ENCODE measurements at regions of chr12 and their contacts with region 1.

Region 1: GRCh38 chr12:57213058-57213715 is 3.4 kb upstream of the NXPH4 start:
- DNase-seq: peak; percentile 79 to 83 (median 82)
- H3K4me3 ChIP-seq: no peak overlapping the region
- H3K4me3 Mint-ChIP-seq: peak overlapping the region in 5 of 8 donors; percentile 39 to 76 (median 49)
- H3K27ac ChIP-seq: no peak overlapping the region
- H3K27ac Mint-ChIP-seq: peak overlapping the region in 5 of 7 donors; percentile 14 to 88 (median 71)
- H3K4me1 ChIP-seq: peaks cover 40% of the 10 kb centered on the region
- H3K4me1 Mint-ChIP-seq: peaks cover 27 to 49% (median 30%) of the 10 kb centered on the region in 4 donors
- H3K27me3 ChIP-seq: peaks cover 38% of the 10 kb centered on the region
- H3K27me3 Mint-ChIP-seq: peaks cover 29 to 35% of the 10 kb centered on the region in 2 donors

Region 2: DNA sequence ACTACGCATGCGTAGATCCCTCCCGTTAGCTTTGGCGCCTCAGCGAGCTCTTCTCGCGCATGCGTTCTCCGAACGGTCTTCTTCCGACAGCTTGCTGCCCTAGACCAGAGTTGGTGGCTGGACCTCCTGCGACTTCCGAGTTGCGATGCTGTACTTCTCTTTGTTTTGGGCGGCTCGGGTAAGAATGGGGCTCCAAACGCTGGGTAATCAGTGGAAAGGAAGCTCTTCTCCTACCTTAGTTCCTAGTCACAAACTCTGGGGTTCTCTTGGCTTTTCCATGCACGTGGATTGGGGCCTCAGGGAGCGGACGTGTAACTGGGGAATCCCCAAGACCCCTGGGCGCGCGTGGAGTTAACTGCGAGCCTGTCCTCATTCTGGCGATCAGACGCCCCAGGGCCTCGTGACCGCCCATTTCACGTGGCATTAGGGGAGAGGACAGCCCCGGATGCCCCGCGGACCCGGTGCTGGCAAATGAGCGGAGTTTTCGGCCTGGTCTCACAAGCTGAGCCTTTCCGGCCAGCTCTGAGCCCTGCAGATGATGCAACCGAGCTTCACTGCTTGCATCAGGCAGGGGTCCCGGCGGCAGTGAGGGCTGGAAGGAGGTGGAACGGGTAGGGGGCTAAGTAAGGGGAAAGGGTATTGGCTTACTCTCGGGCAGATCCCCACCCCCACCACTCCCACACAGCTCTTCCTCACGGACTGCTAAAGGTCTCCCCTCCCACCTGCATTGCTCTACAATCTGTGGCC is 16.6 kb after region 1 on chr12 and contains the start of gene SHMT2:
- CTCF ChIA-PET with region 1: interaction called, 157 read pairs
- POLR2A ChIA-PET with region 1: interaction called, 8 read pairs
- intact Hi-C with region 1: loop called (anchors 1 kb)
- DNase-seq: peak; percentile 89 to 90 (median 90)
- H3K4me3 ChIP-seq: peak within 1 kb of the TSS; percentile 80 to 90
- H3K4me3 Mint-ChIP-seq: peak within 1 kb of the TSS; percentile 92 to 99 (median 94)
- H3K27ac ChIP-seq: peak within 1 kb of the TSS; percentile 57
- H3K27ac Mint-ChIP-seq: peak within 1 kb of the TSS; percentile 80 to 95 (median 89)
- H3K4me1 ChIP-seq: peaks cover 66% of the 10 kb centered on the region
- H3K4me1 Mint-ChIP-seq: peaks cover 27 to 67% (median 46%) of the 10 kb centered on the region in 4 donors
- H3K27me3 ChIP-seq: peaks cover 16% of the 10 kb centered on the region
- H3K27me3 Mint-ChIP-seq: peaks cover 14 to 17% of the 10 kb centered on the region in 2 donors
- total RNA-seq, gene SHMT2: 39.8 to 46.1 TPM

Region 3: DNA sequence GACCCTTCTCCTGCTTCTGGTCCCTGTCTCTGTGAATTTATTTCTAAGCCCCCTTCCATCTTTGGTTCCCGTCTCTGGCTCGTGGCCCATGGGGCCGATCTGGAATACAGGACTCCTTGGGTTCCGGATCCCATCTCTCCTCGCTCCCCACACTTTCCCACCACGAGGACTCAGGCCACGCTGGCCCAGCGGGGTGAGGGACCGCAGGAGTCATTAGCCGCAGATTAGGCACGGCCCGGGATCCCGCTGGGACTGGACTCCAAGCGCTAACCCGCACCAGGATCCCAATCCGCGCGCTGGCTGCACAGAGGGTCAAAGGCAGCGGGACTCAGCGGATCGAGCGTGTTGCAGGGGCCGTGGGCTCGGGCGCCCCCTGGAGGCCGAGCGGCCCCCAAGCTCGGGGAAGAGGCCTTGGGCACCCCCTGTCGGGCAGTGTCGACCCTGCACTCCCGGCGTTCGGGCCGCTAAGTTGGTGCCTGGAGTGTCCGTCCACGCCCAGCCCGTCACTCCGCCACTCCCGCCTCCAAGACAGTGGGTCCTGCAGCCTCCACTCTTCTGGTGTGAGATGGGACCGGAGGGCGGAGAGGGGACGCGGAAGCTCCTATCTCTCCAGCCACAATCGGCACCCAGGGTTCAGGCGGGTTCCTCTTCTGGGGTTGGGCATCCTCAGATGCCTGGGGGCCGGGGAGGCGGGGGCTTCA is 25.8 kb after region 1 on chr12:
- CTCF ChIA-PET with region 1: interaction called, 415 read pairs
- POLR2A ChIA-PET with region 1: interaction called, 86 read pairs
- intact Hi-C with region 1: loop called (anchors 1 kb)
- DNase-seq: peak; percentile 80 to 87 (median 82)
- H3K4me3 ChIP-seq: peak overlapping the region; percentile 42 to 79
- H3K4me3 Mint-ChIP-seq: peak overlapping the region; percentile 90 to 98 (median 94)
- H3K27ac ChIP-seq: no peak overlapping the region
- H3K27ac Mint-ChIP-seq: peak overlapping the region in 6 of 7 donors; percentile 7 to 85 (median 62)
- H3K4me1 ChIP-seq: peaks cover 87% of the 10 kb centered on the region
- H3K4me1 Mint-ChIP-seq: peaks cover 41 to 88% (median 60%) of the 10 kb centered on the region in 4 donors
- H3K27me3 ChIP-seq: peaks cover 43% of the 10 kb centered on the region
- H3K27me3 Mint-ChIP-seq: peaks cover 32 to 52% of the 10 kb centered on the region in 2 donors

Region 4: DNA sequence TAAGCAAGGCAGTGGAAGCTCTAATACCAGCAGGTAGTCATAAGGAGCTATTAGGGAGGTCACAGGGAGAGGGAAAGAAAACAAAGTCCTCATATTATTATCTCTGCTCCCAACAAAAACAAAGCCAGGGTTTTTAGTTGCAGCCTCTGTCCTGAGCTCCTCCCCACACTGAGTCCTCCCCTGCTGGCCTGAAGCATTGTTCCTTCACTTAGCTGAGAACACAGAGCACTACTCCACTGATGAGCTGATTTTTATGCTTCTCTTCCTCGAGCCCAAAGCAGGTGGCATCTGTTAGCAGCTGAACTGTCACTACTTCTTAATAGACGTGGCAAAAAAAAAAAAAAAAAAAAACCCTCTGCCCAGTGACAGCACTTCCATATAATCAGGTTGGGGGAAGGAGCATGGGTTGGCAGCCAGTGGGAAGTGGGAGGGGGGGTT is 48.3 kb after region 1 on chr12:
- CTCF ChIA-PET with region 1: interaction called, 13 read pairs
- POLR2A ChIA-PET with region 1: no interaction called
- intact Hi-C with region 1: no loop called
- DNase-seq: no peak
- H3K4me3 ChIP-seq: no peak overlapping the region
- H3K4me3 Mint-ChIP-seq: no peak overlapping the region
- H3K27ac ChIP-seq: no peak overlapping the region
- H3K27ac Mint-ChIP-seq: peak overlapping the region in 1 of 7 donors; percentile 30
- H3K4me1 ChIP-seq: no peaks in the 10 kb centered on the region
- H3K4me1 Mint-ChIP-seq: peaks cover 0 to 4% (median 2%) of the 10 kb centered on the region in 4 donors
- H3K27me3 ChIP-seq: no peaks in the 10 kb centered on the region
- H3K27me3 Mint-ChIP-seq: no peaks in the 10 kb centered on the region

Region 5: DNA sequence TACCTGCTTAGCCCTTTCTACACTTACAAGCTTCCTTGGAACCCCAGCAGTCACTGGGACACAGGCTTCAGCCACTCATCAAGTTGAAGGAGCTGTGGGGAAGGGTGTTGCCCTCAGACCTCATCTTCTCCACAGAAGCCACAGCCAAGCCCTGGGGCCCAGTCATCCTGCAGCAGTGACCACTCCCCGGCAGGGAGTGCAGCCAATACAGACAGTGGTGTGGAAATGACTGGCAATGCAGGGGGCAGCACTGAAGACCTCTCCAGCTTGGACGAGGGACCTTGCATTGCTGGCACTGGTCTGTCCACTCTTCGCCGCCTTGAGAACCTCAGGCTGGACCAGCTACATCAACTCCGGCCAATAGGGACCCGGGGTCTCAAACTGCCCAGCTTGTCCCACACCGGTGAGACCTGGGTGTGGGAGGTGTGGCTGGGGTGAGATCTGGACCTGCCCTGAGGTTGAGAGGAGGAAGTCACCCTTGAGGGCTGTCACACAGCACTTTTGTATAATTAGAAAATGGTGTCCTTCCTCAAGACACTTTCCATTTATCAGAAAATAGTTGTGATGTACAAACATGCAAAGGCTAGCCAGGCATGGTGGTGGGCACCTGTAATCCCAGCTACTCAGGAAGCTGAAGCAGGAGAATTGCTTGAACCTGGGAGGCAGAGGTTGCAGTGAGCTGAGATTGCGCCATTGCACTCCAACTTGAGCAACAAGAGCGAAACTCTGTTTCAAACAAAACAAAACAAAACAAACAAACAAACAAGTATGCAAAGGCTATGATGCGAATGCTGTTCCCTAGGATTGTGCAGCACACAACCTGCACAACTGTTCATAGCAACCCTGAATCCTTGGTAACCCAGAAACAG is 256.3 kb after region 1 on chr12:
- CTCF ChIA-PET with region 1: no interaction called
- POLR2A ChIA-PET with region 1: no interaction called
- intact Hi-C with region 1: no loop called
- DNase-seq: peak in 1 of 5 donors; percentile 39
- H3K4me3 ChIP-seq: no peak overlapping the region
- H3K4me3 Mint-ChIP-seq: no peak overlapping the region
- H3K27ac ChIP-seq: no peak overlapping the region
- H3K27ac Mint-ChIP-seq: peak overlapping the region in 3 of 7 donors; percentile 21 to 72 (median 43)
- H3K4me1 ChIP-seq: peaks cover 33% of the 10 kb centered on the region
- H3K4me1 Mint-ChIP-seq: peaks cover 17 to 50% (median 27%) of the 10 kb centered on the region in 4 donors
- H3K27me3 ChIP-seq: no peaks in the 10 kb centered on the region
- H3K27me3 Mint-ChIP-seq: no peaks in the 10 kb centered on the region

Measured in CD4-positive, alpha-beta memory T cell (primary cell).